Natural killer cell (primary cell): ENCODE measurements at regions of chr18 and their contacts with region 1.

Region 1: DNA sequence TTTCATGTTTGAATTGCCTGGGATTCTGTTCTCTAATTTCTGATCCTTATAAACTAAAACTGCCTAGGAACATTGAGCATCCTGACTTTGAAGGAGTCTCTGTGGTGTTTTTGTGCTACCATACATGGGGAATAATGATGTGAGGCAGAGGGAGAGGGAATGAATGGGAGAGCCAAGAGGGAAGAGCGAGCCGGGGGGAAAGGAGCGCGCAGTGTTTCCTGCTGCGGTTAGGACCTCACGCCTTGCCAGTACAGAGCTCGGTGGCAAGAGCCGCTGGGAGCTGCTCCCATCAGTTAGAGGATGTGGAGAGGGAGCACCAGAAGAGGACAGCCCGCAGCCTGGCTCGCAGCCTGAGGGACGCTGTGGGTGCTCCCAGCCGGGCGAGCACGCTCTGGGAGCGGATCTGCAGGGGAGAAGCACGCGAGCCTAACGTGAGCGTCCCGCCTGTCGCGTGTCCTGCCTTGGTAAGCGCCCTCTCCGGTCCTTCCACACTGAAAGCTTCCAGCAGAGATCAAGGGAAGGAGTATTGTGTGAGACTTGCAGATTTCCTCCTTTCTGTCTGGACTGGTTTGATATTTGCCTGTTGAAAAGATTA is 114.7 kb downstream of the FAM210A start:
- DNase-seq: no peak
- ATAC-seq: peak in 1 of 3 donors; percentile 9
- H3K4me3 ChIP-seq: peak overlapping the region; percentile 22
- H3K4me3 Mint-ChIP-seq: peak overlapping the region; percentile 72
- H3K27ac ChIP-seq: peak overlapping the region; percentile 37
- H3K27ac Mint-ChIP-seq: peak overlapping the region; percentile 46 to 80
- H3K4me1 ChIP-seq: peaks cover 64% of the 10 kb centered on the region
- H3K4me1 Mint-ChIP-seq: peaks cover 67 to 68% of the 10 kb centered on the region in 2 donors
- H3K27me3 ChIP-seq: peaks cover 16% of the 10 kb centered on the region
- H3K27me3 Mint-ChIP-seq: peaks cover 25 to 46% of the 10 kb centered on the region in 2 donors
- CTCF ChIP-seq: no peak

Region 2: DNA sequence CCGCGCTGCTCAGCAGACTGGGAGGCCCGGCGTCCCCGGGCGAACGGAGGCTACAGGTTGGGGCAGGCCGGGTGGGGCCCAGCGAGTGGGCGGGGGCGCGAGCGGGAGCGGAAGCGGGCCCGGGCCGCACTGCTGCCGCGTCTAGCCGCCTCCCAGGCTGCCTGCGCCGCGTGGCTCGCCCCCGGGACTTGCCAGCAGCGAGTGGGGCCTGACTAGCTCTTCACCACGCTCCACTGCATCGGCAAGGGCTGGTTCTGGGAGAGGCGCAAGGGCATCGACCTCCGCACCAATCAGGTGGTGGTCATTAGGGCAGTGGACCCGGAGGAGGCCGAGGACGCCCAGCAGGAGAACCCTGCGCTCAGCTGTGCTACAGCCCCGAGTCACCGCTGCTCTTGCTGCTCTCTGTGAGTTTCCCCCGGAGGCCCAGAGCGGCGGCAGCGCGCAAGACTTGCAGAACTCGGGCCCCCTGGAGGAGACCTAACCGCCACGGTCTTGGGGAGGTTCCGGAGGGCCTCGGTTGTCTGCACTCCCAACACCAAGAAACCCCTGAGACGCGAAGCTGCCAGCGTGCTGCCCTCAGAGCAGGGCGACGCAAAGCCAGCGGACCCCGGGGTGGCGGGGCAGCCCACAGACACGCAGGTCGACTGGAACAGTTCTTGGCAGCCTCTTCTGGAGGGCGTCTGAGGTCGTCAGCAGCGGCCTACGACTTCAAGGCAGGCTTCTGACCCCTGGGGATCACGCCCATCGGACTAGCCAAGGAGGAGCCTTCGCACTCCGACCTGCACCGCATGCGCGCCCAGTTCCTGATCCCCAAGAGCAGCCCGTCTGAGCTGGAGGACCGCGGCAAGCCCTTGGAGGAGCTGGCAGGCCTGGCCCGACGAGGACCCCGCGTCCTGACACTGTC is 700.4 kb before region 1 on chr18:
- intact Hi-C with region 1: loop called (anchors 10 kb)
- DNase-seq: peak; percentile 70 to 76
- ATAC-seq: peak; percentile 92 to 97 (median 96)
- H3K4me3 ChIP-seq: peak overlapping the region; percentile 35
- H3K4me3 Mint-ChIP-seq: peak overlapping the region; percentile 78
- H3K27ac ChIP-seq: peak overlapping the region; percentile 57
- H3K27ac Mint-ChIP-seq: peak overlapping the region; percentile 78 to 82
- H3K4me1 ChIP-seq: peaks cover 21% of the 10 kb centered on the region
- H3K4me1 Mint-ChIP-seq: peaks cover 18 to 23% of the 10 kb centered on the region in 2 donors
- H3K27me3 ChIP-seq: no peaks in the 10 kb centered on the region
- H3K27me3 Mint-ChIP-seq: peaks cover 0 to 3% of the 10 kb centered on the region in 2 donors
- CTCF ChIP-seq: no peak